ENCODE measurements at regions of chr16 and their contacts with region 1.

Region 1: DNA sequence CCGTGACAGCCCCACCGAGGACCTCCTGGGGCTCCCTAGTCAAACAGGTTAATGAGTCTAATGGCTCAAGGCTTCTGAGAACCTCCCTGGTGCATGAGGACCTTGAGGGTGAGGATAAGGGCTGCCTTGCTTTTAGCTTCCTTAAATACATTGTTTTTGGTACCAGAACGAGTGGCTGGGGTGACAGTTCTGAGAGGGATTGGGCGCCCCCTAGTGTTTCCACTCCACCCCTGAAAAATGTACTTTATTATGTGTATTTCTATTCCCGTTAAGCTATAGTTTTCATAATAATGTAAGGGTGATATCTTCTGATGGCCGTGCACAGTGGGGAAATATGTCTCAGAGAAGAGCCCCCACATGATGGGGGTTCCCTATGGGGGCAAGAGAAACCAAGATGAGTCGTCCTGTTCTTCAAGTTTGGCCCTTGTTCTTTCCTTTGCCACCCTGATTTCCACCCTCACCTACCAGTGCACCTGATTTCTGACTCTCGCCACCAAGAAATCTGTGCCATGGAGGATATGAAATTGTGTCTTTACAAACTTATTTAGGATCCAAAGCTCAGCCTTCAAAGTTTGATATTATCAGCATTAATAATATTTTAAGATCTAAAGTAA is 14.5 kb upstream of the VWA3A start:
- DNase-seq: peak; percentile 61 to 69 (median 67)
- H3K4me3 ChIP-seq: no peak overlapping the region
- H3K4me3 Mint-ChIP-seq: no peak overlapping the region
- H3K27ac ChIP-seq: no peak overlapping the region
- H3K27ac Mint-ChIP-seq: no peak overlapping the region
- H3K4me1 ChIP-seq: no peaks in the 10 kb centered on the region
- H3K4me1 Mint-ChIP-seq: peaks cover 0 to 5% (median 1%) of the 10 kb centered on the region in 4 donors
- H3K27me3 ChIP-seq: no peaks in the 10 kb centered on the region
- H3K27me3 Mint-ChIP-seq: no peaks in the 10 kb centered on the region

Region 2: GRCh38 chr16:21952793-21953540 is 124.8 kb before region 1 on chr16 and contains the start of gene UQCRC2:
- CTCF ChIA-PET with region 1: interaction called, 10 read pairs
- POLR2A ChIA-PET with region 1: no interaction called
- intact Hi-C with region 1: loop called (anchors 5 kb)
- DNase-seq: peak; percentile 90 to 94 (median 92)
- H3K4me3 ChIP-seq: peak within 1 kb of the TSS; percentile 98
- H3K4me3 Mint-ChIP-seq: peak within 1 kb of the TSS; percentile 96 to 100 (median 98)
- H3K27ac ChIP-seq: peak within 1 kb of the TSS; percentile 98
- H3K27ac Mint-ChIP-seq: peak within 1 kb of the TSS; percentile 95 to 100 (median 99)
- H3K4me1 ChIP-seq: peaks cover 53% of the 10 kb centered on the region
- H3K4me1 Mint-ChIP-seq: peaks cover 36 to 82% (median 59%) of the 10 kb centered on the region in 4 donors
- H3K27me3 ChIP-seq: no peaks in the 10 kb centered on the region
- H3K27me3 Mint-ChIP-seq: no peaks in the 10 kb centered on the region
- total RNA-seq, gene UQCRC2: 170 to 177 TPM

Region 3: DNA sequence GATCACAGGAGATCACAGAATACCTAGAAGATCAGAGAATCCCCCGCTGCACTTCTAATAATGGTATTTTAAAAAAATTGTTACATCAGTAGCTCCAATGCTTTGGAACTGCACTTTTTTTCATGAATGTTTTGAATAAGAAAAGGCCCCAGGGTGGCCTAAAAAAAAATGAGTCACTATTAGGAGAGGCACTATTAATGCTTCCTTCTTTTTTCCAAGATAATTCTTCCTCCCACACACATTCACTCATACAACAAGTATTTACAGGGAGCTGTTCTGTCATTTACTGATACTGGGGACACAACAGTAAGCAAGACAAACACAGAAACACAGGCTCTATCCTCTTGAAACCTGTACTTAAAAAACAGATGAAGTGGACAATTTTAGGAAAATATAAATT is 76.2 kb before region 1 on chr16:
- CTCF ChIA-PET with region 1: interaction called, 181 read pairs
- POLR2A ChIA-PET with region 1: interaction called, 6 read pairs
- intact Hi-C with region 1: loop called (anchors 1 kb)
- DNase-seq: no peak
- H3K4me3 ChIP-seq: no peak overlapping the region
- H3K4me3 Mint-ChIP-seq: no peak overlapping the region
- H3K27ac ChIP-seq: no peak overlapping the region
- H3K27ac Mint-ChIP-seq: no peak overlapping the region
- H3K4me1 ChIP-seq: peaks cover 9% of the 10 kb centered on the region
- H3K4me1 Mint-ChIP-seq: peaks cover 4 to 18% (median 13%) of the 10 kb centered on the region in 4 donors
- H3K27me3 ChIP-seq: no peaks in the 10 kb centered on the region
- H3K27me3 Mint-ChIP-seq: no peaks in the 10 kb centered on the region

Region 4: GRCh38 chr16:22055878-22056277 is 21.9 kb before region 1 on chr16:
- CTCF ChIA-PET with region 1: interaction called, 24 read pairs
- POLR2A ChIA-PET with region 1: no interaction called
- intact Hi-C with region 1: no loop called
- DNase-seq: no peak
- H3K4me3 ChIP-seq: no peak overlapping the region
- H3K4me3 Mint-ChIP-seq: no peak overlapping the region
- H3K27ac ChIP-seq: no peak overlapping the region
- H3K27ac Mint-ChIP-seq: no peak overlapping the region
- H3K4me1 ChIP-seq: peaks cover 14% of the 10 kb centered on the region
- H3K4me1 Mint-ChIP-seq: peaks cover 10 to 33% (median 21%) of the 10 kb centered on the region in 4 donors
- H3K27me3 ChIP-seq: no peaks in the 10 kb centered on the region
- H3K27me3 Mint-ChIP-seq: no peaks in the 10 kb centered on the region

Region 5: GRCh38 chr16:22091758-22092600 is 14.2 kb after region 1 on chr16 and contains the start of gene VWA3A:
- CTCF ChIA-PET with region 1: interaction called, 32 read pairs
- POLR2A ChIA-PET with region 1: no interaction called
- intact Hi-C with region 1: no loop called
- DNase-seq: no peak
- H3K4me3 ChIP-seq: no peak within 1 kb of the TSS
- H3K4me3 Mint-ChIP-seq: no peak within 1 kb of the TSS
- H3K27ac ChIP-seq: no peak within 1 kb of the TSS
- H3K27ac Mint-ChIP-seq: no peak within 1 kb of the TSS
- H3K4me1 ChIP-seq: no peaks in the 10 kb centered on the region
- H3K4me1 Mint-ChIP-seq: no peaks in the 10 kb centered on the region
- H3K27me3 ChIP-seq: no peaks in the 10 kb centered on the region
- H3K27me3 Mint-ChIP-seq: peaks cover 2 to 8% of the 10 kb centered on the region in 2 donors
- total RNA-seq, gene VWA3A: 0.33 to 0.41 TPM

Region 6: GRCh38 chr16:22174642-22175041 is 96.8 kb after region 1 on chr16:
- CTCF ChIA-PET with region 1: no interaction called
- POLR2A ChIA-PET with region 1: no interaction called
- intact Hi-C with region 1: no loop called
- DNase-seq: no peak
- H3K4me3 ChIP-seq: no peak overlapping the region
- H3K4me3 Mint-ChIP-seq: no peak overlapping the region
- H3K27ac ChIP-seq: no peak overlapping the region
- H3K27ac Mint-ChIP-seq: no peak overlapping the region
- H3K4me1 ChIP-seq: no peaks in the 10 kb centered on the region
- H3K4me1 Mint-ChIP-seq: no peaks in the 10 kb centered on the region
- H3K27me3 ChIP-seq: no peaks in the 10 kb centered on the region
- H3K27me3 Mint-ChIP-seq: peaks cover 0 to 1% of the 10 kb centered on the region in 2 donors

Measured in CD4-positive, alpha-beta memory T cell (primary cell).